ENCODE measurements at regions of chr5 and their contacts with region 1.

Region 1: GRCh38 chr5:133123297-133123696 is 71.5 kb downstream of the HSPA4 start:
- DNase-seq: no peak
- ATAC-seq: no peak
- H3K4me3 ChIP-seq: no peak overlapping the region
- H3K27ac ChIP-seq: no peak overlapping the region
- H3K4me1 ChIP-seq: no peaks in the 10 kb centered on the region
- H3K27me3 ChIP-seq: no peaks in the 10 kb centered on the region
- CTCF ChIP-seq: no peak

Region 2: GRCh38 chr5:133240425-133241091 is 117.3 kb after region 1 on chr5:
- intact Hi-C with region 1: loop called in 3 of 10 experiments (anchors 5 to 10 kb)
- DNase-seq: peak in 1 of 2 donors; percentile 14
- ATAC-seq: peak in 7 of 8 donors; percentile 36 to 87 (median 79)
- H3K4me3 ChIP-seq: no peak overlapping the region
- H3K27ac ChIP-seq: peak overlapping the region in 1 of 10 donors; percentile 15
- H3K4me1 ChIP-seq: peaks cover 0 to 27% (median 7%) of the 10 kb centered on the region in 9 donors
- H3K27me3 ChIP-seq: peaks cover 0 to 7% (median 0%) of the 10 kb centered on the region in 7 donors
- CTCF ChIP-seq: no peak

Region 3: GRCh38 chr5:133247881-133248624 is 124.8 kb after region 1 on chr5:
- intact Hi-C with region 1: loop called in 3 of 10 experiments (anchors 5 to 10 kb)
- DNase-seq: peak in 1 of 2 donors; percentile 38
- ATAC-seq: peak; percentile 56 to 80 (median 62)
- H3K4me3 ChIP-seq: no peak overlapping the region
- H3K27ac ChIP-seq: no peak overlapping the region
- H3K4me1 ChIP-seq: peaks cover 0 to 7% (median 0%) of the 10 kb centered on the region in 9 donors
- H3K27me3 ChIP-seq: no peaks in the 10 kb centered on the region
- CTCF ChIP-seq: peak in 8 of 9 donors; percentile 10 to 65 (median 56)